Activated CD4-positive, alpha-beta T cell treated with anti-CD3 and anti-CD28 coated beads for 36 hours (primary cell): ENCODE measurements at regions of chr9 and their contacts with region 1.

Region 1: DNA sequence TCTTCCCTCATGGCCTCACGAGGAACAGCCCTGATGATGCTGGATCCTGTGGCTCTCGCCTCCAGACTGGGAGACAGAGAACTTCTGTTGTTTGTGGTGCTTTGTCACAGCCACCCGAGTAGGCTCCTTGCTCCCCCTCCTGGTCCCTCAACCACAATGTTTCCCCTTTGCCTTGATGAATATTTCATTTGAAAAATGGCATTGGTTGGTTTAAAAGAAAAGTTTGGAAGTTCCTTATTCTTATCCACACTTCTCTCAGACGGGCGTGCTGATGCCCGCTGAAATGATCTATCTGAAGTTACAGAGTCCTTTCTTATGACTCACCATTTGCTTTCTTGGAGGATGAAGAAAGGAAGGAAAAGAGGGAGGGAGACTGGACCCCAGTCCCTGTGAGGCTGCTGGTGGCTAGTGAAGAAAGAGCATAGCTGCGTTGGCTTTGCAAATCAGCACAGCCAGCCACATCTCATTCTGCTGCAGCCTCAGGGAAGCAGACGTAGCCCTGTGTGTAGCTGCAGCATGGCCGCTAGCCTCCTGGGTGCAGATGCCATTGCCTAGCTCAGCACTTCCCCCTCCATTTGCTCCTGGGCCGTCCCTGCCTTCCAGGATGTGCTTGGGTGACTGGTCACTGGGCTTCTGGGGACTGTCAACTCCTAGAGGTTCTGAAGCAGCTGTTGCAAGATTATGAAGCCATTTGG is 185.9 kb downstream of the ERCC6L2 start:
- DNase-seq: peak; percentile 63
- ATAC-seq: peak; percentile 78
- H3K4me3 Mint-ChIP-seq: no peak overlapping the region
- H3K27ac Mint-ChIP-seq: no peak overlapping the region
- H3K4me1 Mint-ChIP-seq: peaks cover 8% of the 10 kb centered on the region
- H3K27me3 Mint-ChIP-seq: no peaks in the 10 kb centered on the region

Region 2: DNA sequence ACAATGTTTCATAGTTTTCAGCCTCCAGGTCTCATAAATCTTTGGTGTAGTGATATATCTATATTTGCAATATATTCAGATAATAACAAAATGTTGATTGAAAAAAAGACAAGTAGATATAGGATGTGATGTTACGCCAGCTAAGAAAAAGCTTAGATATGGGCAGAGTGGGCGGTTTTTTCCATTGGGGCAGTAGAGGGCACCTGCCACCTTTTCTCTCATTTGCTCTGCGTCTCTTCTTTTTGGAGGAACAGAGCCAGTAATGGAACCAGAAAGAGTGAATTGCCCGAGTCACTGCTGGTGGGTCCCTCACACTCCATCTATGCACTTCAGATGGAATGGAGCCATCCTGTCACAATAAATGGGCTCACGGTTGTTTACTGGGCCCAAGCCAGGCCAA is 681.8 kb before region 1 on chr9:
- CTCF ChIA-PET with region 1: no interaction called
- POLR2A ChIA-PET with region 1: no interaction called
- intact Hi-C with region 1: loop called in 1 of 2 experiments (anchors 5 kb)
- DNase-seq: peak; percentile 48
- ATAC-seq: no peak
- H3K4me3 Mint-ChIP-seq: no peak overlapping the region
- H3K27ac Mint-ChIP-seq: no peak overlapping the region
- H3K4me1 Mint-ChIP-seq: peaks cover 4% of the 10 kb centered on the region
- H3K27me3 Mint-ChIP-seq: peaks cover 11% of the 10 kb centered on the region

Region 3: GRCh38 chr9:95605816-95606488 is 455.5 kb before region 1 on chr9:
- CTCF ChIA-PET with region 1: no interaction called
- POLR2A ChIA-PET with region 1: no interaction called
- intact Hi-C with region 1: loop called in 1 of 2 experiments (anchors 10 kb)
- DNase-seq: no peak
- ATAC-seq: no peak
- H3K4me3 Mint-ChIP-seq: no peak overlapping the region
- H3K27ac Mint-ChIP-seq: no peak overlapping the region
- H3K4me1 Mint-ChIP-seq: no peaks in the 10 kb centered on the region
- H3K27me3 Mint-ChIP-seq: no peaks in the 10 kb centered on the region